ENCODE measurements at regions of chr15 and their contacts with region 1.

Region 1: DNA sequence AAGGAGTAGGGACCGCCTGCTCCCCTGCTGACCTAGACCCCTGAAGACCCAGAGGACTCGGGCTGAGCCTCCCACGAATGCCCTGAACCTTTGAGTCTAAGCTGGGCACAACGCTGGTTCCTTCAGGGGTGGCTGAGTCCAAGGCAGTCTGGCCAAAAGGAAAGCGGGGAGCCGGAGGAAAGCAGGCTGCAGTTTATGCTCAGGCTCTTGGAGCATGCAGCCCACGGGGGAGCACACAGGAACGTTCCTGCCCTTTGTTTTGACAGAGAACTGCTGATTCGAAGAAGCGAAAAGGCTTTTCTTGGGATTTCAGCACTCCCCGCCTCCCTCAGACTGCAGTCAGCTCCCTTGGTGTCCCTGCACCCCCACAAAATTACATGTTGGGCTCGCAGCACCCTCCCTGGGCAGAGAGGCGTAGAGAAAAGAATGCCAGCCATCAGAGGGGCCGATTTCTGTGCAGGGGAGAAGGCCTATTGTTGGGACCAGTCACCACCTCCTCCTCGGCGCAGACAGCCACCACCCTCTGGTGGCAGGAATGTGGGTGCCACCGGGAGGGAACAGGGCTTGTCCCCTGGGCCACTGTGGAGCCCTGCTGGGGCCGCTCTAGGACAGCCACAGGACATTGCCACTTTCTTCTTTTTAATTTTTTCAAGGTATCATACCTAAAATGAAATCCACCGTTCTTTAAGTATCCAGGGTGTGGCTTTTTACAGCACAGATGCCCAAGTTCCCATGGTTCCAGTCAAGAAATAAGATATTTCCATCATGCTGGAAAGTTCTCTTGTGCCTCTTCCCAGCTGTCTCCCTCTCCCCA is 72.2 kb downstream of the SMAD6 start:
- DNase-seq: peak; percentile 89 to 98
- ATAC-seq: peak; percentile 86 to 89
- H3K4me3 ChIP-seq: no peak overlapping the region
- H3K27ac ChIP-seq: peak overlapping the region; percentile 93 to 94
- H3K4me1 ChIP-seq: peaks cover 96% of the 10 kb centered on the region
- CTCF ChIP-seq: peak; percentile 100
- EP300 ChIP-seq: no peak
- POLR2A ChIP-seq: no peak
- RAD21 ChIP-seq: peak; percentile 99 to 100

Region 2: GRCh38 chr15:66685638-66686150 is 88.5 kb before region 1 on chr15:
- CTCF ChIA-PET with region 1: interaction called, 46 read pairs
- POLR2A ChIA-PET with region 1: interaction called, 3 read pairs
- DNase-seq: no peak
- ATAC-seq: peak; percentile 51 to 78; a peak in 4 of 6 replicates
- H3K4me3 ChIP-seq: no peak overlapping the region
- H3K27ac ChIP-seq: no peak overlapping the region
- H3K4me1 ChIP-seq: no peaks in the 10 kb centered on the region
- CTCF ChIP-seq: peak; percentile 58
- EP300 ChIP-seq: no peak
- POLR2A ChIP-seq: no peak
- RAD21 ChIP-seq: peak; percentile 44

Region 3: GRCh38 chr15:66730168-66731021 is 43.8 kb before region 1 on chr15:
- CTCF ChIA-PET with region 1: interaction called, 75 read pairs
- POLR2A ChIA-PET with region 1: no interaction called
- DNase-seq: peak in 1 of 2 experiments; percentile 48
- ATAC-seq: peak; percentile 54 to 58; a peak in 5 of 6 replicates
- H3K4me3 ChIP-seq: no peak overlapping the region
- H3K27ac ChIP-seq: peak overlapping the region; percentile 9 to 58; a peak in 4 of 6 replicates
- H3K4me1 ChIP-seq: peaks cover 38% of the 10 kb centered on the region
- CTCF ChIP-seq: no peak
- EP300 ChIP-seq: no peak
- POLR2A ChIP-seq: no peak
- RAD21 ChIP-seq: no peak

Region 4: GRCh38 chr15:66789029-66790025 is 15.1 kb after region 1 on chr15:
- CTCF ChIA-PET with region 1: interaction called, 140 read pairs
- POLR2A ChIA-PET with region 1: no interaction called
- DNase-seq: peak in 1 of 2 experiments; percentile 77
- ATAC-seq: peak; percentile 83
- H3K4me3 ChIP-seq: no peak overlapping the region
- H3K27ac ChIP-seq: 0 out of 6 replicates have a peak overlapping the region, but pooled peaks of 1 of the 2 experiments have one; percentile 6
- H3K4me1 ChIP-seq: peaks cover 19% of the 10 kb centered on the region; the same call in 2 of the 3 replicates
- CTCF ChIP-seq: peak; percentile 66
- EP300 ChIP-seq: no peak
- POLR2A ChIP-seq: no peak
- RAD21 ChIP-seq: peak; percentile 72 to 73

Region 5: DNA sequence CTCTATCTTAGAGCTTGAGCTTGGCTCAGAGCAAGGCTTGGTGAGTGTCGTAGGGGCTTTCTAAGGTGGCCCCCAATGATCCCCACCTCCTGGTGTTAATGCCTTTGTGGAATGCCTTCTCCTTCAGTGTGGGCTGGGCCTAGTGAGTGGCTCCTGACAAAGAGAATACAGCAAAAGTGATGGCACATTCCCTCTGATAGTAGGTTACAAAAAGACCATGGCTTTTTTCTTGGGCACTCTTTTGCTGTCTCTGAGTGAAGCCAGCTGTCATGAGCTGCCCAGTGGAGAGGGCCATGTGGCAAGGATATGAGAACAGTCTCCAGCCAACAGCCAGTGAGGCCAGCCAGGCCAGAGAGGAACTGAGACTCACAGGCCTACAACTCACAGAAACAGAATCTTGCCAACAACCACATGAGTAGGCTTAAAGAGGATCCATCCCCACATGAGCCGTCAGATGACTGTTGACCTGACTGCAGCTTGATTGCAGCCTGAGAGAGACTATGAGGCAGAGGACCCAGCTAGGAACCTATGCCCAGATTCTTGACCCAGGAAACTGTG is 61.2 kb after region 1 on chr15:
- CTCF ChIA-PET with region 1: interaction called, 26 read pairs
- POLR2A ChIA-PET with region 1: no interaction called
- DNase-seq: no peak
- ATAC-seq: no peak
- H3K4me3 ChIP-seq: no peak overlapping the region
- H3K27ac ChIP-seq: peak overlapping the region in 1 of 2 experiments; percentile 7; a peak in 1 of 6 replicates
- H3K4me1 ChIP-seq: peaks cover 11% of the 10 kb centered on the region
- CTCF ChIP-seq: no peak
- EP300 ChIP-seq: no peak
- POLR2A ChIP-seq: no peak
- RAD21 ChIP-seq: no peak

Measured in A549 (cell line).